ENCODE measurements at regions of chr17 and their contacts with region 1.

Region 1: GRCh38 chr17:42112552-42113176 is at the start of gene DHX58:
- DNase-seq: peak; percentile 80
- H3K4me3 ChIP-seq: peak within 1 kb of the TSS; percentile 43 to 62 (median 49)
- H3K27ac ChIP-seq: peak within 1 kb of the TSS; percentile 41
- H3K4me1 ChIP-seq: peaks cover 16% of the 10 kb centered on the region
- H3K27me3 ChIP-seq: no peaks in the 10 kb centered on the region
- CTCF ChIP-seq: no peak
- total RNA-seq, gene DHX58: 11.7 to 12.2 TPM

Region 2: GRCh38 chr17:42019509-42020404 is 92.9 kb before region 1 on chr17 and contains the start of gene NKIRAS2:
- CTCF ChIA-PET with region 1: interaction called, 3 read pairs
- dilution Hi-C with region 1: no loop called
- in situ Hi-C with region 1: loop called in 1 of 2 experiments (anchors 10 kb)
- intact Hi-C with region 1: no loop called
- DNase-seq: peak; percentile 87
- H3K4me3 ChIP-seq: peak within 1 kb of the TSS; percentile 79 to 98 (median 90)
- H3K27ac ChIP-seq: peak within 1 kb of the TSS; percentile 66
- H3K4me1 ChIP-seq: peaks cover 31% of the 10 kb centered on the region
- H3K27me3 ChIP-seq: no peaks in the 10 kb centered on the region
- CTCF ChIP-seq: peak; percentile 70 to 87
- total RNA-seq, gene NKIRAS2: 28.1 to 40.2 TPM

Region 3: GRCh38 chr17:42039794-42040763 is 72.6 kb before region 1 on chr17:
- CTCF ChIA-PET with region 1: no interaction called
- dilution Hi-C with region 1: loop called (anchors 10 kb)
- in situ Hi-C with region 1: no loop called
- intact Hi-C with region 1: no loop called
- DNase-seq: no peak
- H3K4me3 ChIP-seq: no peak overlapping the region
- H3K27ac ChIP-seq: no peak overlapping the region
- H3K4me1 ChIP-seq: peaks cover 9% of the 10 kb centered on the region
- H3K27me3 ChIP-seq: no peaks in the 10 kb centered on the region
- CTCF ChIP-seq: no peak

Region 4: GRCh38 chr17:42183741-42184711 is 71.4 kb after region 1 on chr17:
- CTCF ChIA-PET with region 1: no interaction called
- dilution Hi-C with region 1: loop called (anchors 10 kb)
- in situ Hi-C with region 1: no loop called
- intact Hi-C with region 1: loop called (anchors 10 kb)
- DNase-seq: peak; percentile 12
- H3K4me3 ChIP-seq: peak overlapping the region in 2 of 3 experiments; percentile 35 to 39
- H3K27ac ChIP-seq: no peak overlapping the region
- H3K4me1 ChIP-seq: peaks cover 21% of the 10 kb centered on the region
- H3K27me3 ChIP-seq: peaks cover 12% of the 10 kb centered on the region
- CTCF ChIP-seq: peak; percentile 39 to 47